Right ventricle myocardium superior (tissue), 1 donor: ENCODE measurements at regions of chr10 and their contacts with region 1.

Region 1: GRCh38 chr10:112314822-112315474 is 31.7 kb downstream of the TECTB start:
- DNase-seq: peak; percentile 81
- ATAC-seq: peak; percentile 94

Region 2: GRCh38 chr10:111756217-111757061 is 558.5 kb before region 1 on chr10:
- intact Hi-C with region 1: loop called (anchors 10 kb)
- DNase-seq: no peak
- ATAC-seq: peak; percentile 43

Region 3: GRCh38 chr10:112434988-112435619 is 120.2 kb after region 1 on chr10:
- intact Hi-C with region 1: loop called (anchors 10 kb)
- DNase-seq: no peak
- ATAC-seq: no peak